Right ventricle myocardium inferior (tissue), 1 donor: ENCODE measurements at regions of chr4 and their contacts with region 1.

Region 1: DNA sequence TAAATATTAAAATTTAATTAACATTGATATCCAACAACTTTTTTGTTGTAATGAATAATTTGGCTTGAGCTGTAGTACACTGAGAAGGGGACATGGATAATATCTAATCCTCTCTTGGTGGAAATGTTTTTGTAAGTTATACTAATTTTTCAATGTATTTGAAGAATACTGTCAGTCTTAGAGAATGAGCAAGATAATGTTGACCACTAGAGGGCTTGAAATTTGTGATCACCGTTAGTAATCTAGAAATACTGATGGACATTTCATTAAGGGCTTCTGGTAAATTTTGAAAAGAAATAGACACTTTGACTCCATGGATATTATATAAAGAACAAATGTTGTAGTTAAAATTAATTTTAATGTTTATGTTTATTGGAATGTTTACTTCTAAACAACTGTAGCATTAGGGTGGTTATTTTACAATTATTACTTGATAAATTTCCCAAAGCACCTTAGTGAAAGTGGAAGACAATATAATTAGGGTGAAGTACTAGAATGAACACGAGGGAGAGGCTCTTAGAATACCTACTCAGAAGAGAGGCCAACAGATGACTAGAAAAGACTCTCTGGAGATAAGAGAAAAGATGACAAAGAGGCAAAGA is 20.0 kb upstream of the CAMK2D start:
- DNase-seq: no peak
- ATAC-seq: no peak

Region 2: DNA sequence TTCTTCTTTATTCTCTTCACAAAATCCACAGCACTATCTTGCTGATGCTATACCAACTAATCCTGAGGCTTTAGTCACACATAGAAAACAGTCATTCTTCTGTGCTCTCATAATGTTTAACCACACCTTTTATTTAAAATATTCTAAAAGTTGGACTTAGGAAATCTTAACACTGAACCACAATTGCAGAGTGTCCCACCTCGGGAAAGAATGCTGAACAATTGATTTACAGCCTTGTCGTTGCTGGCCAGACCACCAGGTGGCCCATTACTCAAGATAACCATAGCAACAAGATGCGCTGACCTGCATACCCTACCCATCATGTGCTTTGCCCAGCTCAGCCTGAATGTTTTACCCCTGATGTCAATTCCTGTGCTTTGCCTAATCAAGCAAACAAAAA is 97.1 kb after region 1 on chr4:
- intact Hi-C with region 1: no loop called
- DNase-seq: no peak
- ATAC-seq: no peak

Region 3: GRCh38 chr4:113899271-113900070 is 117.9 kb after region 1 on chr4:
- intact Hi-C with region 1: loop called (anchors 10 kb)
- DNase-seq: no peak
- ATAC-seq: no peak

Region 4: DNA sequence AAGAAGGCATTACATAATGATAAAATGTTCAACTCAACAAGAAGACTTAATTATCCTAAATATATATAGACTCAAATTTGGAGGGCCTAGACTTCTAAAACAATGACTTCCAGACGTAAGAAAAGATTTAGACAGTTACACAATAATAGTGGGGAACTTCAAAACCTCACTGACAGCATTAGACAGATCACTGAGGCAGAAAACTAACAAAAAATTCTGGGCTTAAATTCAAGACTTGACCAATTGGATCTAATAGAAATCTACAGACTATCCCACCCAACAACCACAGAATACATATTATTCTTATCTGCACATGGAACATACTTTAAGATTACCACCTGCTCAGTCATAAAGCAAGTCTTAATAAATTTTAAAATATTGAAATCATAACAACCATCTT is 291.2 kb after region 1 on chr4:
- intact Hi-C with region 1: loop called (anchors 5 kb)
- DNase-seq: no peak
- ATAC-seq: no peak